ENCODE measurements at regions of chr12 and their contacts with region 1.

Region 1: DNA sequence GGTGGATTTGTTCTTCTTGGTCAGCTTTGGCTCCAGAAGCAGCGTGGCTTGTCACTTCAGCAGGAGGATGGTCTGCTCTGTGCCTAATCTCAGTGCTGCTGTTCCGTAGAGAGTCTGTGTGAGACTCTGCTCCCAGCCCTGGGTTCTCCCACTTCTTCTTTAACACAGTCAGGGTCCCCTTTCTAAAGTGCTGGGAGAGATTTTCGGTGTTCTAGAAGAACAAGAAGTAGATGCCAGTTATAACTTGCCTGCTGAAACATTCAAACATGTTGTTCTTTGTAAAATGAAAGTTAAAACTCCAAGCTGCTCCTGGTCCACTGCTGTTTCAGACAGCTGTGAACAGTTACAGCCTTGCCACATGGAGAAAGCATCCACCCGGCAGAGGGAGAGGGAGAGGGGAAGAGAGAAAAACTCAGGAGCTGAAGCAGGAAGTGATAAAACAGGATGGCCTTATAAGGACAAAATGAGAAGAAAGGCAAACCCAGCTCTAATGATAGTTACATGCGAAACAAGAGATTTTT is 55.2 kb upstream of the CERS5 start:
- DNase-seq: peak; percentile 11
- H3K4me3 Mint-ChIP-seq: no peak overlapping the region
- H3K27ac Mint-ChIP-seq: no peak overlapping the region
- H3K4me1 Mint-ChIP-seq: peaks cover 11% of the 10 kb centered on the region
- H3K27me3 Mint-ChIP-seq: no peaks in the 10 kb centered on the region

Region 2: DNA sequence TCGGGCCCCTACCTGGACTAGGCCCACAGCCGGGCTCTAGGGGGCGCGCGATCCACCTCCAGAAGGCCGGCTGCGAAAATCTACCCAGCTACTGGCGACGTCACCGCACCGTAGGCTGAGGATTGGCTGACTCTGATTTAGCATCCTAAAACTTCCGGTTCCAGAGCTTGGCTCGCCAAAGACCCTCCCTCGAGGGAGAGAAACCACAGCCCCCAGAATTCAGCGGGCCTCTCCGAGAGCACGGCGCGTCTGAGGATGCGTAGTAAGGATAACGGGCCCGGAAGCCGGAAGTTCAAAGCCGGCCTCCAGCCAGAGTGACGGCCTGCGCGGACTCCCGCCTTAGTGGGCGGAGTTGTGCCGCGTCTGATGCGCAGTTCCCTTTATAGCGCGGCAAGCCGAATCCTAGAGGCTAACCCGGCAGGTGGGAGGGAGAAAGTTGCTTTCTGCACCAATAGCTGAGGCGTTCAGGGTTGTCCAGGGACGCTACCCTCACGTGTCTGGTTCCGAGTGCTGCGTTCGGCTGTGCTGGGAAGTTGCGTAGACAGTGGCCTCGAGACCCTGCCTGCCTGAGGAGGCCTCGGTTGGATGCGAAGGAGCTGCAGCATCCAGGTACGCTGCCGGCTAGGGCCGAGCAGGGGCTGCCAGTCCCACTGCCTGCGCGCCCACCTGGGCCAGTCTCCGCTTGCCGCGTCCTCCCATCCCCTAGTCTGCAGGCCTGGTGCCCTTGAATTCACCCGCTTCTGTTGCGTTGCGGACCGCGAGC is 110.5 kb before region 1 on chr12 and contains the start of gene COX14:
- intact Hi-C with region 1: loop called (anchors 5 kb)
- DNase-seq: peak; percentile 98
- H3K4me3 Mint-ChIP-seq: peak within 1 kb of the TSS; percentile 94
- H3K27ac Mint-ChIP-seq: peak within 1 kb of the TSS; percentile 94
- H3K4me1 Mint-ChIP-seq: peaks cover 42% of the 10 kb centered on the region
- H3K27me3 Mint-ChIP-seq: no peaks in the 10 kb centered on the region
- total RNA-seq, gene COX14: 44.3 and 45.6 TPM in 2 replicates

Region 3: DNA sequence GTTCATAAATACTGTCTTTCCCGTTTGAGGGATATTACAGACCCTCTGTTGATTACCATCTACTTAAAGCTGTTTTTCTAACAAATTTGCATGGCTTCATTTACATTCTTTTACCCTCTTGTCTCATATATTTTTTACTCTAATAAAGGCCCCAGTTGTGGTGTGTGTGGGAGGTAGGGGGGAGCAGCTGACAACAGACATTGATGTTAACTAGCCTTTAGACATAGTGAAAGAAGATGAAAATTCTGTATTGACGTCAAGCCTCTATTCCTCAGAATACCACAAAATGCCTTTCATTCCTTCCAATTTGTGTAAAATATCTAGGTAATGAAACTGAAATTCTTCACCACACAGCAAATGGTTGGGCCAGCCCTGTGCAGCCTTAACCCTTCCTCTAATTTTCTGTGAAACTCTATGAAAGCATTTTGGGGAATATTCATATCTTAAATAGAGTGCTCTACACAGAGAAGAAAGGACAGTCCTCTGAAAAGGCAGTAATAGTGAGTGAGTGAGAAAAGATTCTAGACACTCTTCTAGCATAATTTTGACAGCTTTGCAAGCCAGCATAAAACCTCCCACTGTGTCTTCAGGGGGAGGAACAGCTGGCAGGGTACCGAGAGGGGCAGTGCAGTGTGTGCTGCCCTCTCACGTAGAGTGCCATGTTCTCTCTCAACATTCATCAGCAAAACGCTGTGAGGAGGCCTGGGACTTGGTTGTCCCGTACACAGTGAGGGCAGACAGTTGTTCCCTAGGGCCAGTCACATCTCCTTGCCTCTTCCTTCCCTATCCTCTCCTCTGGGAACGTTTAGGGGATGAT is 35.0 kb before region 1 on chr12:
- intact Hi-C with region 1: loop called (anchors 1 kb)
- DNase-seq: no peak
- H3K4me3 Mint-ChIP-seq: peak overlapping the region; percentile 46
- H3K27ac Mint-ChIP-seq: peak overlapping the region; percentile 84
- H3K4me1 Mint-ChIP-seq: peaks cover 48% of the 10 kb centered on the region
- H3K27me3 Mint-ChIP-seq: no peaks in the 10 kb centered on the region

Region 4: GRCh38 chr12:50246873-50247612 is 24.7 kb after region 1 on chr12:
- intact Hi-C with region 1: loop called (anchors 1 kb)
- DNase-seq: peak; percentile 2
- H3K4me3 Mint-ChIP-seq: peak overlapping the region; percentile 79
- H3K27ac Mint-ChIP-seq: peak overlapping the region; percentile 90
- H3K4me1 Mint-ChIP-seq: peaks cover 38% of the 10 kb centered on the region
- H3K27me3 Mint-ChIP-seq: peaks cover 1% of the 10 kb centered on the region

Region 5: GRCh38 chr12:50979369-50980052 is 757.2 kb after region 1 on chr12:
- intact Hi-C with region 1: loop called (anchors 2 kb)
- DNase-seq: peak; percentile 67
- H3K4me3 Mint-ChIP-seq: peak overlapping the region; percentile 71
- H3K27ac Mint-ChIP-seq: peak overlapping the region; percentile 96
- H3K4me1 Mint-ChIP-seq: peaks cover 38% of the 10 kb centered on the region
- H3K27me3 Mint-ChIP-seq: no peaks in the 10 kb centered on the region

Measured in activated T-helper 1 cell treated with anti-CD3 and anti-CD28 coated beads, Interleukin-12 subunit alpha, Interleukin-12 subunit beta, Interleukin-2, Interleukin-4 antibody, amounts not matched to agents 30 ng/mL and 10 ng/mL and 1 ng/mL, durations not matched to agents 14 hours and 24 hours and 36 hours (primary cell).